ENCODE measurements at regions of chr18 and their contacts with region 1.

Region 1: GRCh38 chr18:36309436-36310391 is 12.2 kb downstream of the FHOD3 start:
- DNase-seq: no peak
- H3K4me3 ChIP-seq: no peak overlapping the region
- H3K27ac ChIP-seq: peak overlapping the region in 2 of 4 donors; percentile 0 to 11
- H3K4me1 ChIP-seq: peaks cover 0 to 19% (median 7%) of the 10 kb centered on the region in 3 donors
- H3K27me3 ChIP-seq: no peaks in the 10 kb centered on the region
- CTCF ChIP-seq: no peak
- POLR2A ChIP-seq: no peak

Region 2: GRCh38 chr18:36366994-36367839 is 57.5 kb after region 1 on chr18:
- intact Hi-C with region 1: loop called (anchors 10 kb)
- DNase-seq: no peak
- H3K4me3 ChIP-seq: no peak overlapping the region
- H3K27ac ChIP-seq: no peak overlapping the region
- H3K4me1 ChIP-seq: no peaks in the 10 kb centered on the region
- H3K27me3 ChIP-seq: no peaks in the 10 kb centered on the region
- CTCF ChIP-seq: no peak
- POLR2A ChIP-seq: no peak

Region 3: DNA sequence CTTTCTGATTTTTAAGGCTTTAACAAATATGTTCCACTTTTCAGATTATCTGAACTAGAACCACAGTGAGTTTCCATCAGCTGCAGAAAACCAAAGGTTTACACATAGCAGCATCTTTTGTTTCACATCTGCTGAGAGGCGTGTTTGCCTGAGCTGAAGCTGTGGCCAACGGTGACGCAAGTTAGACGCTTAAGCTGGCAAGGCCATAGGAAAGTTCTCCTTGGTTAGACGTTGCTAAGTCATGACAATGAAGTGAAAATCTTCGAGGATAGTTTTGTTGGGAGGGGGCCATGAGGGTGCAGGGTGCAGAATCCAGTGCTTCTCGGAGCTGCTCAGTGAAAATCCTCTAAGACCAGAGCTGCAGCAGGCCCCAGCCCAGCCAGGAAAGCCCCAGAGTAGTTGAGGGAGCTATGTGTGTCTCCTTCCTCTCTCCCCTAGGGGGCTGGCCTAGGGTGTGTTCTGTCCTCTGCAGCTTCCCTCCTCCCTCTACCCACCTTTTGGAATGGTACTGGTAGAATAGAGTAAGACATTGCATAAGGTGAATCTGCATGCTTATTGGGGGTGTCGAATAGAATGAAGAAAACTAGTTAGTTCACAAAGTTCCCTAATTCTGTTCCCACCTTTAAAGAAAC is 93.2 kb after region 1 on chr18:
- intact Hi-C with region 1: loop called (anchors 10 kb)
- DNase-seq: no peak
- H3K4me3 ChIP-seq: no peak overlapping the region
- H3K27ac ChIP-seq: peak overlapping the region in 1 of 4 donors; percentile 27
- H3K4me1 ChIP-seq: peaks cover 0 to 31% (median 0%) of the 10 kb centered on the region in 3 donors
- H3K27me3 ChIP-seq: no peaks in the 10 kb centered on the region
- CTCF ChIP-seq: no peak
- POLR2A ChIP-seq: no peak

Measured in esophagus squamous epithelium (tissue), 5 donors.